ENCODE measurements at regions of chr9 and their contacts with region 1.

Region 1: DNA sequence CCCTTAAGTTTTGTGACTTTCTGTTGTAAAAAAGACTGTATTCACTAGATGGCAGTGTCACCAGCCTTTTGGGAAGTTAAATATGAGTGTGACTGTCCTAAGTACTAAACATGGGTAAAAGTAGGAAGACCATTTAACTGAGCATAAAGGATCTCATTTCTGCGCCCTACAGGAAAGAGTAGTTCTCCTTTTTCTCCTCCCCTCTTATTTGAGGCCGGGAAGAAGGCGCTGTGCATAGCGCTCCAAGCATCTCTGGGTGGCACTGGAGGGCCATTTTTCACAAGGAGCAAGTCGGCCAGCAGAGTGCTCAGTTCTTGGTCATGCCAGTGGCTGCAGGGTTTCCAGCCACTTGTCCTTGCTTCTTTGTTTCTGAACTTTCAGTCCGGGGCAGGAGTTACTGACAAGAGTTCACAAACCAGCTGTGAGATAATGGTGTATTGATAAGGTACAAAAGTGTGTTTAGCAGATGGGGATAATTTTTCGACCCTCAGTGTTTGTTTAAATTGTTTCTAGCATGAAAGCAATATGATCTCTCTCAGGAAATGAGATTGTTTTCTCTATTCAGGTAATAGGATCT is 227.6 kb upstream of the DMRT1 start:
- DNase-seq: peak; percentile 70
- ATAC-seq: peak; percentile 98
- H3K4me3 Mint-ChIP-seq: no peak overlapping the region
- H3K27ac Mint-ChIP-seq: peak overlapping the region; percentile 17; the same call in 1 of the 2 replicates
- H3K4me1 Mint-ChIP-seq: peaks cover 21% of the 10 kb centered on the region
- H3K27me3 Mint-ChIP-seq: no peaks in the 10 kb centered on the region
- CTCF ChIP-seq: peak; percentile 29; the same call in 1 of the 2 replicates

Region 2: DNA sequence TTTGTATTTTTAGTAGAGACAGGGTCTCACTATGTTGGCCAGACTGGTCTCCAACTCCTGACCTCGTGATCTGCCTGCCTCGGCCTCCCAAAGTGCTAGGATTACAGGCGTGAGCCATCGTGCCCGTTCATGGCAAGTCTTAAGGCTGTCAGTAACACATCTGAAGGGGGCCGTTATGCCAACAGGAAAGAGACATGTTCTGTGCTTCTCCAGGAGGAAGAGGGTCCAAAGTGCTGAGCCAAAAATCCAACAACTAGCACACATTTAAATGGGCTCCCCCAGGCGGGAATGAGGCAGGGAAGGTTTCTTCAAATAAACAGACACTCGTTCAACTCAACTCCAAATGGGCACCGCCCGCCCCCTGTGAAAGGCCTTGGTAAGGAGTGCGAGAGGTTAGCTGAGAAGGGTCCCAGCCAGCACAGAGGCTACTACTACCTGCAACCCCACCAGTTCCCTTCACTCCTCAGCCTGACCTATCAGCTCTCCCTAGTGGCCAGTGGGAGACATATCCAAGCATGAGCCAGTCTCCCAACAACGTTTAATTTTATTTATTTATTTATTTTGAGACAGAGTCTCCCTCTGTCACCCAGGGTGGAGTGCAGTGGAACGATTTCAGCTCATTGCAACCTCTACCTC is 143.5 kb after region 1 on chr9:
- CTCF ChIA-PET with region 1: interaction called, 11 read pairs
- POLR2A ChIA-PET with region 1: no interaction called
- DNase-seq: peak; percentile 55
- ATAC-seq: peak; percentile 100
- H3K4me3 Mint-ChIP-seq: no peak overlapping the region
- H3K27ac Mint-ChIP-seq: no peak overlapping the region
- H3K4me1 Mint-ChIP-seq: peaks cover 7% of the 10 kb centered on the region
- H3K27me3 Mint-ChIP-seq: no peaks in the 10 kb centered on the region
- CTCF ChIP-seq: peak; percentile 53; the same call in 1 of the 2 replicates